ENCODE measurements at regions of chr2 and their contacts with region 1.

Region 1: DNA sequence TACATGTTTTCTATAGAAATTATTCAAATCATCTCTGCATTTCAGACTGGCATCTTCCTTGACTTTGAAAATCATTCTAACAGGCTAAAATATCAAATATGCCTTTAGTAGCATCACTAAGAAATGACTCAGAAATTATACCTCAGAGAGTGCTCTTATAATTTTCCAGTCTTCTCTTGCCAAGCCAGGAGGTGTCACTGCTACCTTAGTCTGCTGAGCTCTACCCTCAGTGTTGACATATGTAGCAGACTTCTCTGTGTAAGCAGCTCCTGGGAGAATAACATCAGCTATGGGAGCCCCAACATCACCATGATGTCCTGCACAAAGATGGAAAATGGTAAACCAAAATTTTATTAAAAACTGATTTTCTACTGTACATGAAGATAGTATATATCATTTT is 31.6 kb downstream of the NDUFS1 start:
- DNase-seq: no peak
- H3K4me3 ChIP-seq: no peak overlapping the region
- H3K27ac ChIP-seq: no peak overlapping the region
- H3K4me1 ChIP-seq: no peaks in the 10 kb centered on the region
- H3K27me3 ChIP-seq: no peaks in the 10 kb centered on the region
- CTCF ChIP-seq: no peak

Region 2: DNA sequence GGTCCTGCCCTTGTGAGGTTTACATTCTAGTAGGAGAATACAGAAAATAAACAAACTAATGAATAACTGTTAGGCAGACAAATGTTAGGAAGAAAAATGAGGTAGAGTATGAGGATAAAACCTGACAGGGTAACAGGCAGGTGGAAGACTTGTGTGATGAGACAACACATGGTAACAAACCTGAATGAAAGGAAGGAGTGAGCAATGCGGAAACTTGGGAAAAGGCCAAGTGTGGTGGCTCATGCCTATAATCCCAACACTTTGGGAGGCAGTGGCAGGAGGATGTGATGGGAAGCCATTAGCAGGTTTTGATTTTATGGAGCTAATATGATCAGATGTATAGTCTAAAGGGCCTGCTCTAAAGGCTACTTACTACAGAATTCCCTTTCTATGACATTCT is 115.9 kb before region 1 on chr2:
- intact Hi-C with region 1: loop called (anchors 10 kb)
- DNase-seq: no peak
- H3K4me3 ChIP-seq: no peak overlapping the region
- H3K27ac ChIP-seq: no peak overlapping the region
- H3K4me1 ChIP-seq: no peaks in the 10 kb centered on the region
- H3K27me3 ChIP-seq: no peaks in the 10 kb centered on the region
- CTCF ChIP-seq: no peak

Region 3: DNA sequence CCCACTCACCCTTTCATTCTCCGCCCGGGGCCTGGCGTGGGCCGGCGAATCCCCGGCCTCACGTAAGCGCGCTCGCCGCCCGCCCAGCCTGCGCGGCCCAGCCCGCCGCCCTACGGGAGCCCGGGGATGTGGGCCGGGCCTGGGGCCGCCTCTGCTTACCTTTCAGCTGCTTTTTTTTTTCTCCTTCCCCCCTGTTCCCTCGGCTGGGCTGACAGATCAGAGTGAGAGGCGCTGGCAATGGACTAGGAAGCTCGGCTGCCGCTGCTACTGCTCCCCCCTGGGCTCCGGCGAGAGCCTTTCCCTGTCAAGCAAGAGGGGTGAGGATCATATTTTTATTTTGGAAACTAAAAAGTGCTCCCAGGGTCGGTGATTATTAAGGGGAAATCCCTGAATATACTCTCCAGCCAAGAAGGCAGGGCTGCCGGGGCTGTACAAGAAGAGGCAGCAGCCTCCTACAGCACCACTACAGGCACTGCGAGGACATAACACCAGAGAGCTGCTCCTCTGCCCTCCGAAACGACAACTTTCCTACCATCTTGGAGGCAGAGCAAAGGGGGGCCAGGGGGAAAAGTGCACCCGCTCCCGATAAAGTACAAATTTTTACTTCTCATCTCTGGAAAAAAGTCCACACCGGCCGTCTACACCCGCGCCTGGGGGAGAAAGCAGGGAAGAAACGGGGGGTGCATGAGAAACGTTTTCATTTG is 41.8 kb before region 1 on chr2 and contains the start of gene INO80D:
- intact Hi-C with region 1: no loop called
- DNase-seq: peak; percentile 81
- H3K4me3 ChIP-seq: peak within 1 kb of the TSS; percentile 88
- H3K27ac ChIP-seq: peak within 1 kb of the TSS; percentile 98
- H3K4me1 ChIP-seq: peaks cover 4% of the 10 kb centered on the region
- H3K27me3 ChIP-seq: no peaks in the 10 kb centered on the region
- CTCF ChIP-seq: peak; percentile 44
- total RNA-seq, gene INO80D: 20.2 to 29.9 TPM